Activated CD8-positive, alpha-beta memory T cell treated with anti-CD3 and anti-CD28 coated beads, Interleukin-2, amount 10 ng/mL, durations not matched to agents 7 days and 5 days (primary cell): ENCODE measurements at regions of chr2 and their contacts with region 1.

Region 1: DNA sequence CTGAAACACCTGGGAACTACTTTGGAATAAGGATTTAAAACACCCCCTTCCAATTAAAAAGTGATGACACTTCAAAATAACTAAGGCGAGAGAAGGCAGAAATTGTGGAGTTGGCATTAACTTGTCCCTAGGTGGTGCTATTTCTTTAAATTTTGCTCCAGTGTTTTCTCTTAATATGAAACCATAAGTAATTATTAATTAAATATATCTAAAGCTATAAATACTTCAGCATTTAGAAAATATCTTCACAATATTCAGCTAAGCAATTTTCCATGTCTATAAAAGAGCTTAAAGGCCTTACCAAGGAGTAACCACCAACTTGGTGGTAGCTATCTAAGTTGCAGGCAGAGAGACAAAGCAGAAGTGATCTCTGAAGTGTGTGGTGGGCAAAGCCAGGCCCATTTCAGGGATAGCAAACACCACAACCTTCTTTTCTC is 186.8 kb upstream of the PGAP1 start:
- DNase-seq: no peak
- ATAC-seq: peak; percentile 52
- H3K4me3 Mint-ChIP-seq: no peak overlapping the region
- H3K27ac Mint-ChIP-seq: peak overlapping the region; percentile 76
- H3K4me1 Mint-ChIP-seq: peaks cover 28% of the 10 kb centered on the region
- H3K27me3 Mint-ChIP-seq: no peaks in the 10 kb centered on the region

Region 2: DNA sequence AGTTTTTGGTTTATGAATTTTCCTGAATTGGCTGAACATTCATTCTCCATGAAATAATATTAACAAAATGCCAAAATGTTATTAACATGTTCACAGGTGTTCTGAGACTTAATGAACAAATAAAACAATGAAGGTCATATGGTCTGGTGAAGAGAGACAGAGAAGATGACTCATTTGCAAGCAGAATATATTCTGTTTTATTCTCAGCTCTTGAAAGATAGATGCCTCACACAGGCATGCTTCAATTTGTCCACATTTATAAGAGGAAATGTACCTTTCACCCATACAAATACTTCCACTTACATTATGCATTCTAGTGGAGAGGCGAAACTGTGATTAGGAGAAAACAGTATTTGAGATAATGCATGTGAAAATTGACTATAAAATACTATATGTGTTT is 111.4 kb before region 1 on chr2:
- CTCF ChIA-PET with region 1: no interaction called
- DNase-seq: no peak
- ATAC-seq: no peak
- H3K4me3 Mint-ChIP-seq: no peak overlapping the region
- H3K27ac Mint-ChIP-seq: no peak overlapping the region
- H3K4me1 Mint-ChIP-seq: peaks cover 2% of the 10 kb centered on the region
- H3K27me3 Mint-ChIP-seq: no peaks in the 10 kb centered on the region

Region 3: GRCh38 chr2:197128126-197128525 is 14.8 kb after region 1 on chr2:
- CTCF ChIA-PET with region 1: interaction called, 17 read pairs
- DNase-seq: no peak
- ATAC-seq: no peak
- H3K4me3 Mint-ChIP-seq: no peak overlapping the region
- H3K27ac Mint-ChIP-seq: peak overlapping the region; percentile 72
- H3K4me1 Mint-ChIP-seq: peaks cover 53% of the 10 kb centered on the region
- H3K27me3 Mint-ChIP-seq: no peaks in the 10 kb centered on the region

Region 4: DNA sequence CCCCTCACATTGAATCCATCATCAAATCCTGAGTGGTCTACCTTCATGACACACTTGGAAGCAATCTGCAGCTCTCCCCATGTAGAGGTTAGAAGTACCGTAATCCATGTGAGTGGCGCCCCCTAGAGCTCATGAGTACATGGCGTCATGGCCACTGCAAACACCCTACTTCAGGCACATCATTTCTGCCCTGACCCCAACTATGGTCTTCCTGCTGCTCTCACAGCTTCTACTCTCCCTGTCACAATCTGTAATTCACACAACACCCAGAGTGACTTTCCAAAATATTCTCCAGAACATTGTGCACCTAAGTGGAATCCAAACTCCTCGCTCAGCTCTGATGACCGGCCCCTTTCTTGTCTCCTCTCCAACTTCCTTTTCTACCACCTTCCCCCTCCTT is 55.4 kb after region 1 on chr2:
- CTCF ChIA-PET with region 1: interaction called, 33 read pairs
- DNase-seq: peak; percentile 79
- ATAC-seq: peak; percentile 79
- H3K4me3 Mint-ChIP-seq: no peak overlapping the region
- H3K27ac Mint-ChIP-seq: peak overlapping the region; percentile 45
- H3K4me1 Mint-ChIP-seq: peaks cover 33% of the 10 kb centered on the region
- H3K27me3 Mint-ChIP-seq: no peaks in the 10 kb centered on the region

Region 5: DNA sequence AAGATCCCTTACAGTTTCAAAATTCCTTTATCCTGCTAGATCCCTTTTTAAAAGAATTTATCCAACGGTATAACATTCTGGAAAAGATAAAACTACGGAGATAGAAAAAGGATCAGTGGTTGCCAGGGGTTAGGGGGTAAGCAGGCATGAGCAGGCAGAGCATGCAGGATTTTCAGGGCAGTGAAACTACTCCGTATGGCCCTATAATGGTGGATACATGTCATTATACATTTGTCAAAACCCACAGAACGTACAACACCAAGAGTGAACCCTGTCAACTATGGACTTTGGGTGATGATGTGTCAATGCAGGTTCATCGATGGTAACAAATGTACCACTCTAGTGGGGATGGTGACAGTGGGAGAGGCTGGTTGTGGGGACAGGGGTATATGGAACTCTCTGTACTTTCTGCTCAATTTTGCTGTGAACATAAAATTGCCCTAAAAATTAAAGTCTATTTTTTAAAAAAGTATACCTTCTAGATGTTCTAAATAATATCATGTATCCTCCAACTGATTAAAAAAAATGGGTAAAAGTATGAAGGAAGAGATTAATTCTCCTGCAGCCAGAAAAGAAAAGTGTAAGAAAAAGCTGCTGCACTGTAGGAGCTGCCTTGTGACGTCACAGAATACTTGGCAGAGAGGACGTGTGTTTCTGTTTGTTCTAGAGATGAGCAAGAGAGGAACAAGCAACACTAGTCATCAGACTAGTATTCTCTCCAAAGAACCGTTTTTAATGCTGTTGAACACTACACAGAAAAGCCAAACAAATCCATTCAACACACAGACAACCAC is 173.7 kb after region 1 on chr2:
- CTCF ChIA-PET with region 1: no interaction called
- DNase-seq: peak; percentile 77
- ATAC-seq: peak; percentile 97
- H3K4me3 Mint-ChIP-seq: peak overlapping the region; percentile 60
- H3K27ac Mint-ChIP-seq: peak overlapping the region; percentile 95
- H3K4me1 Mint-ChIP-seq: peaks cover 74% of the 10 kb centered on the region
- H3K27me3 Mint-ChIP-seq: no peaks in the 10 kb centered on the region

Region 6: DNA sequence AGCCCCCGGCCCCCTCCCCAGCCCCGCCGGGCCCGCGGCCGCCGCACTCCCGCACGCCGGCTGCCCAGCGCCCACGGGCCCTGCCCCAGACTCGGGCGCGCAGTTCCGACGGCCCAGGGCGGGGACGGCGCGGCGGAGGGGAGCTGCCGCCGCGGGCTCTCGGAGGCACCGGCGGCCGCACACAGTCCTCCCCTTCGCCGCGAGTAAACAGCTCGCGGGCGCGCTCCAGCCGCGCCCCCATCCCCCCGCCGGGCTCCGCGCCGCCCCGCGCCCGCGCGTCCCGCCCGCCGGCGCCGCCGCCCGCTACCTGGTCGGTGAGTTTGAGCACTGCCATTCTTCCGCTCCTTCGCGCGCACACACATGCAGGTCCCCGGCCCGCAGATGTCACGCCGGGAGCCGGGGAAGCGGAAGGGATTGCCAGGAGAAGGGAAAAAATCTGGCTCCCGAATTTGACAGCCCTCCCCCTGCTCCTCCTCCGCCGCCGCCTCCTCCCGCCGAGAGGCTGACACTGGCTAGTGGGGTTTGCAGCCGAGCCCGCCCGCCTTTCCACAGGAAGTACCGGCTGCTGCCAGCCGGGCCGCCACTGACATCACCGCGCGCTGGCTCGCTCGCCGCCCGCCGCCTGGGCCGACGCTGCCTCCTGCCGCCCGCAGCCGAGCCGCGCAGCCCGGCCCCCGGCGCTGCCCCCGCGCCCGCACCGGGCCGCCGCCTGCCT is 197.1 kb after region 1 on chr2 and contains the start of gene ANKRD44:
- CTCF ChIA-PET with region 1: interaction called, 12 read pairs
- DNase-seq: peak; percentile 93
- ATAC-seq: peak; percentile 72
- H3K4me3 Mint-ChIP-seq: peak within 1 kb of the TSS; percentile 94
- H3K27ac Mint-ChIP-seq: peak within 1 kb of the TSS; percentile 93
- H3K4me1 Mint-ChIP-seq: peaks cover 56% of the 10 kb centered on the region
- H3K27me3 Mint-ChIP-seq: no peaks in the 10 kb centered on the region
- total RNA-seq, gene ANKRD44: 210 to 249 TPM

Region 7: GRCh38 chr2:197363998-197364538 is 250.8 kb after region 1 on chr2:
- CTCF ChIA-PET with region 1: interaction called, 18 read pairs
- DNase-seq: no peak
- ATAC-seq: no peak
- H3K4me3 Mint-ChIP-seq: no peak overlapping the region
- H3K27ac Mint-ChIP-seq: no peak overlapping the region
- H3K4me1 Mint-ChIP-seq: peaks cover 11% of the 10 kb centered on the region
- H3K27me3 Mint-ChIP-seq: no peaks in the 10 kb centered on the region